PC-9 (cell line): ENCODE measurements at regions of chr7 and their contacts with region 1.

Region 1: DNA sequence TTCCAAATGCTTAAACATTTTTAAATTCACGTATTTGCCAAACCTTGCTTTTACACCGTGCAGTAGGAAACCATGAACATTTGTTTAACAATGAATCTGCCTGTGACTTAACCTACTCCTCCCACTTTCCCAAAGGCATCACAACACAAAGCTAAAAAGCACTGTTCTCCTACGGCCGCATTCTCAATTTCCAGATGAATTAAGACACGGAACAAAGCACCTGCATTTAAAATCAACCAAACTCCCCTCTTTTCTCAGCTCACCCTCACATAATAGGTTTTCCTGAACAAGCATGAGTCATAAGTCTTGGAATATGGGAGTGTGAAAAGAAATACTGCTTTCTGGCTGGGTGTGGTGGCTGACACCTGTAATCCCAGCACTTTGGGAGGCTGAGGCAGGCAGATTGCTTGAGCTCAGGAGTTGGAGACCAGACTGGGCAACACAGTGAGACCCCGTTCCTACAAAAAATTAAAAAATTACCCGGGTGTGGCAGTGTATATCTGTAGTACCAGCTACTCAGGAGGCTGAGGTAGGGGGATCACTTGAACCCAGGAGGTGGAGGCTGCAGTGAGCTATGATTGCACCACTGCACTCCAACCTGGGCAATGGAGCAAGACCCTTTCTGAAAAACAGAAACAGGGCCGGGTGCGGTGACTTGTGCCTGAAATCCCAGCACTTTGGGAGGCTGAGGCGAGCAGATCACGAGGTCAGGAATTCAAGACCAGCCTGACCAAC is 51.7 kb upstream of the CYTH3 start:
- DNase-seq: no peak
- H3K4me3 ChIP-seq: no peak overlapping the region
- H3K27ac ChIP-seq: no peak overlapping the region
- H3K4me1 ChIP-seq: no peaks in the 10 kb centered on the region
- H3K27me3 ChIP-seq: no peaks in the 10 kb centered on the region
- CTCF ChIP-seq: no peak

Region 2: DNA sequence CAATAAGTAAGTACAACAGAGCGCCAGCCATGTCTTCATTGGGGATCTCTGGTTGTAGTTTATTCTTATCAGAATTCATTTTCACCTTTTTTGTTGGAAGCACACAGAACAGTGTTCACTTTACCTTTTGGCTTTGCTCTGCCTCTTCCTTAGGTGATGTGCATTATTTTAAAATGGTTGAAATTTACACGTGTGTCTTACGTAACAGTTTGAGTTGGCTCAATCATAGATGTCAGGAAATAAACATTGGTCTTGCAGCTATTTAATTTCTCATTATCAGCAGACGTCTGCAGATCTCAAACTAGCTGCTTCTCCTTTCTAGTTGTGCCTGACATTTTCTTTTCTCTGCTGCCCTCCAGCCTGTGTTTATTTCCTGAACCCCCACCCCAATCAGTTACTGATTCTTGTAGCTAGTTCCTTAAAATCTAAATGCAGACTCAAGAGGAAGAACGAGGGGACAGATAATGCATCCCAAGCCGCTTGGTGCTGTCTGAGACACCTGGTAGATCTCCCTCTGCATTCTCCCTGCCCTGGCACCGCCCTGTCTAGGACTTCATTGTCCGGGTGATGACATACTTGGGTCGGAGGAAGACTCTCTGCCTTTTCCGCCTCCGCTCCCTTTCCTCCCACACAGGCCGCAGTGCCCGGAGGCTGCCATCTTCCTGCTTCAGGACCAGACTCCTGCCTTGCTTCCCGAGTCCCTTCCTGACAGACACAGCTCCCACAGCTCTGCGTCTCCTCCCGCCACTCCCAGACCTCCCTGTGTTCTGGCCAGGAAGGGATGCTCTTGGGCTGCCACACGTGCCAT is 184.7 kb before region 1 on chr7:
- CTCF ChIA-PET with region 1: interaction called, 12 read pairs
- POLR2A ChIA-PET with region 1: no interaction called
- intact Hi-C with region 1: no loop called
- DNase-seq: no peak
- H3K4me3 ChIP-seq: no peak overlapping the region
- H3K27ac ChIP-seq: no peak overlapping the region
- H3K4me1 ChIP-seq: no peaks in the 10 kb centered on the region
- H3K27me3 ChIP-seq: no peaks in the 10 kb centered on the region
- CTCF ChIP-seq: no peak

Region 3: GRCh38 chr7:6175645-6176044 is 148.5 kb before region 1 on chr7:
- CTCF ChIA-PET with region 1: no interaction called
- POLR2A ChIA-PET with region 1: no interaction called
- intact Hi-C with region 1: loop called (anchors 5 kb)
- DNase-seq: peak; percentile 69 to 84
- H3K4me3 ChIP-seq: no peak overlapping the region
- H3K27ac ChIP-seq: peak overlapping the region; percentile 49
- H3K4me1 ChIP-seq: peaks cover 39% of the 10 kb centered on the region
- H3K27me3 ChIP-seq: no peaks in the 10 kb centered on the region
- CTCF ChIP-seq: no peak

Region 4: GRCh38 chr7:6272481-6273323 is 51.4 kb before region 1 on chr7 and contains the start of gene CYTH3:
- CTCF ChIA-PET with region 1: no interaction called
- POLR2A ChIA-PET with region 1: no interaction called
- intact Hi-C with region 1: loop called (anchors 1 kb)
- DNase-seq: peak; percentile 61 to 96
- H3K4me3 ChIP-seq: peak within 1 kb of the TSS; percentile 90
- H3K27ac ChIP-seq: peak within 1 kb of the TSS; percentile 36
- H3K4me1 ChIP-seq: peaks cover 28% of the 10 kb centered on the region
- H3K27me3 ChIP-seq: no peaks in the 10 kb centered on the region
- CTCF ChIP-seq: no peak
- total RNA-seq, gene CYTH3: 78.8 and 84.4 TPM in 2 replicates

Region 5: GRCh38 chr7:6392706-6393666 is 68.9 kb after region 1 on chr7:
- CTCF ChIA-PET with region 1: no interaction called
- POLR2A ChIA-PET with region 1: no interaction called
- intact Hi-C with region 1: no loop called
- DNase-seq: peak; percentile 95 to 99
- H3K4me3 ChIP-seq: peak overlapping the region; percentile 42; the same call in 1 of the 2 replicates
- H3K27ac ChIP-seq: peak overlapping the region; percentile 93
- H3K4me1 ChIP-seq: peaks cover 77% of the 10 kb centered on the region
- H3K27me3 ChIP-seq: no peaks in the 10 kb centered on the region
- CTCF ChIP-seq: no peak